Thyroid gland (tissue), 4 donors: ENCODE measurements at regions of chr10 and their contacts with region 1.

Region 1: GRCh38 chr10:86376852-86377796 is 10.5 kb upstream of the GRID1 start:
- DNase-seq: peak; percentile 74 to 79
- H3K4me3 ChIP-seq: no peak overlapping the region
- H3K27ac ChIP-seq: no peak overlapping the region
- H3K4me1 ChIP-seq: peaks cover 4% of the 10 kb centered on the region in 2 donors
- H3K27me3 ChIP-seq: no peaks in the 10 kb centered on the region
- CTCF ChIP-seq: peak; percentile 58 to 99 (median 99)
- POLR2A ChIP-seq: no peak

Region 2: DNA sequence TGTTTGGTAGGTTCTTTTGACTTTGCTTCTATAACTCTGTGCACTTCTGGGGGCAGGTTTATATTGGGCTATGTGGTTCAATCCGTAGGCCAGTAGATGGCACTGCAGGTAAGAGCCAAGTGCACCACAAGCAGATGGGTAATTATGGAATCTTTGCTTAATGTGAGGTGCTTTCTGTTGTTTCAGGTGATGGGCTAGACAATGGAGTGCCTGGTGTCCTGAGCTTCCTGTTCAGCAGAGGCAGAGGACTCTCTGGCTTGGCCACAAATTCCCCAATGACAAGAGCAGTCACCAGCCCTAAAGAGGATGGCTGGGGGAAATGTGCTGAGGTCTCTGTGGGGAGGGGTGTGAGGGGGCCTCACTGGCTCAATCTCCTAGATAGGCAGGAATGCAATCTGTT is 1593.7 kb before region 1 on chr10:
- intact Hi-C with region 1: loop called (anchors 10 kb)
- DNase-seq: peak; percentile 49 to 51
- H3K4me3 ChIP-seq: no peak overlapping the region
- H3K27ac ChIP-seq: no peak overlapping the region
- H3K4me1 ChIP-seq: peaks cover 0 to 3% of the 10 kb centered on the region in 2 donors
- H3K27me3 ChIP-seq: no peaks in the 10 kb centered on the region
- CTCF ChIP-seq: peak; percentile 11 to 80 (median 66)
- POLR2A ChIP-seq: no peak

Region 3: DNA sequence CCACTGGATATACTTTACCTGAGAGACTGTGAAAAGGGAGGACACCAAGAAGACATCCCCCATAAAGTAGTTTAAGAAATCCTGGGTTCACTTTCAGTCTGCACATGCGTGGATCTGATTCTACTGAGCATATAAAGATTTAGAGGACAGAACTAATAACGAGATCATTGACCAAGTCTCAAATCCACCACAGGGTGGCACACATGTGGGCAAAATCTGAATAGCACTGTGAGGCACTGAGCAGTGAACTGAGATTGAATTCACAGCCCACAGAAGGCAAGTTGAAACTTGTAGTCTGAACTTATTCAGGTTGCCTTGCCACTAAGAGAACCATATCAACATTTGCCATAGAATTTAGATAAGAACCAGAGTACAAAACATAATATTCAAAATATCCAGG is 829.1 kb before region 1 on chr10:
- intact Hi-C with region 1: loop called (anchors 10 kb)
- DNase-seq: peak; percentile 53 to 69
- H3K4me3 ChIP-seq: no peak overlapping the region
- H3K27ac ChIP-seq: no peak overlapping the region
- H3K4me1 ChIP-seq: peaks cover 0 to 5% of the 10 kb centered on the region in 2 donors
- H3K27me3 ChIP-seq: no peaks in the 10 kb centered on the region
- CTCF ChIP-seq: peak in 5 of 6 experiments; percentile 27 to 77 (median 72)
- POLR2A ChIP-seq: no peak

Region 4: DNA sequence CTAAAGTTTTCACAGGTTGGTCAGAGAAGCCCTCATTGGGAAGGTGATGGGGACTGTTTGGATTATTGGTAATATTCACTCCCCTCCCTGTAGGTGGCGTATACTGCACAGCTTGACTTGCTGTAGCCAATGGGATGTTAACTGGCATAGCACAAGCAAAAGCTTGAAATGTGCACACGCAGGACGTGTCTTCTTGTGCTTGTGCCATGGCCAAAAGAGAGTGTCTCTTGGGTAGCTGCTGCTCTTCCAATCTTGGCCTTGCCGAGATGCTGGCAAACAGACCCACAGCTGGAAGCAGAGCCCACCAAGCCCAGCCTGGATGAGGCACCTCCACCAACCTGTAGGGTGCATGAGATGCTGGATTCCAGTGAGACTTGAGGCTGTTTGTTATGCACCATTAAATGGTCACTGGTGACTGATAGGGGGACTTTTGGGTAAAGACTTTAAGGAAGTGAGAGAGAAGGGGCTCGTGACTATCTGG is 276.5 kb before region 1 on chr10:
- intact Hi-C with region 1: loop called (anchors 10 kb)
- DNase-seq: peak in 1 of 2 donors; percentile 5
- H3K4me3 ChIP-seq: no peak overlapping the region
- H3K27ac ChIP-seq: no peak overlapping the region
- H3K4me1 ChIP-seq: peaks cover 0 to 12% of the 10 kb centered on the region in 2 donors
- H3K27me3 ChIP-seq: no peaks in the 10 kb centered on the region
- CTCF ChIP-seq: peak in 4 of 6 experiments; percentile 38 to 59 (median 52)
- POLR2A ChIP-seq: no peak